BJ (cell line): ENCODE measurements at regions of chr2 and their contacts with region 1.

Region 1: DNA sequence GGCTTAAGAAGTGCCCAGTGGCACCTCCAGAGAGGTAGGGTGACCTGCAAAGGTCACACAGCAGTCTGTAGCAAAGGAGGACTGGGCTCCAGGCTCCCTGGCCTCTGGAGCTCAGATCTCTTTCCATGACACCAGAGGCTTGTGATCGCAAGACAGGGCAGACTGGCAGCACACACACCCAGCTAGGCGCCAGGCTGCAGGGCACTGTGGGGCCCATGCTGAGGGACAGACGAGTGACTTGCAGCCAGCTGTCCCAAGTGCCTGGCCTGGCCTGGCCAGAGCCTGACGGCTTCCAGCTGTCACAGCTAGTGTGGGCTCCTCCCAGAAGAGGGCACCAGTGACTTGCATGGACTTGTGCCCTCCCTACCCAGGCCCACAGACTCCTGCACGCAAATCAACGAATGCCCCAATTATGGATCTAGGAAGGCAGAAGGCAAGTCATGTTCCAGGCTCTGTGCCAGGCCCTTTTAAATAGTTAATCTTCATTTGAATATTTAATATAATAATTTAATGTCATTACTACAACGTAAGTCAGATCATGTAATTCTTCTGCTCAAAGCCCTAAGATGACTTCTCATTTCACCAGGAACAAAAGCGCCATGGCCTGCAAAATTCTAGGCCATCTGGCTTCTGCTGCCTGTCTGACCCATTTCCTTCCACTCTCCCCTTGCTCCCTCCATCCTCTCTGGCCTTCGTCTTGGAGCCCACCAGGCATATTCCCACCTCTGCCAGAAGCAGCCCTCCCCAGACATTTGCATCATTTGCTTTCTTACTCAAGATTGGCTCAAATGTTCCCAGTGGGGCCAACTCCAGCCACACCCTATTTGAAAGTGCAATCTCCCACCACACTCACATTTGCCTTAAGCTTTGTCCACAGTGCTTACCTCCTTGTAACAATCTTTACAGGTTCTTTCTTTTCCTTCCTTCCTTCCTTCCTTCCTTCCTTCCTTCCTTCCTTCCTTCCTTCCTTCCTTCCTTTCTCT is 3.7 kb upstream of the SPEG start:
- DNase-seq: no peak
- H3K4me3 ChIP-seq: no peak overlapping the region
- H3K27me3 ChIP-seq: 0 out of 2 replicates have a peak, but pooled peaks cover 2% of the 10 kb centered on the region
- CTCF ChIP-seq: peak; percentile 35; the same call in 1 of the 2 replicates

Region 2: DNA sequence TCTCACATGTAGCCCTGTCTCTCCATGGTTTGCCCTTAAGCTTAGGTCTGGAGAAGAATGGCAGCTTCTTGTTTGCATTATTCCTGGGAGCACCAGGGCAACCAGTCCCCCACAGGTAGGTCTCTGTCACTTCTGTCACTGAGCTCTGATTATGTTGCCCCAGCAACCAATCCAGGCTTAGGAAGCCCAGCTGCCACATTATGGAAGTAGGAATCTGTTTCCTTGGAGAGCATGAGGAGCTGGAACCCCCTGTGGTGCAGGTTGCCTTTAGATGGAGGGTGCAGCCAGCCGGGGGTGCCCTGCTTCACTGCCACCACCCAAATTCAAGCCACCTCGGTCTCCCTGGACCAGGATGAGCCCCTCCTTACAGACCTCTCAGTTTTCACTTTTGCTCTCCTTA is 103.2 kb before region 1 on chr2:
- CTCF ChIA-PET with region 1: no interaction called
- POLR2A ChIA-PET with region 1: no interaction called
- DNase-seq: no peak
- H3K4me3 ChIP-seq: no peak overlapping the region
- H3K27me3 ChIP-seq: peaks cover 23% of the 10 kb centered on the region
- CTCF ChIP-seq: no peak

Region 3: GRCh38 chr2:219441451-219442255 is 10.7 kb after region 1 on chr2:
- CTCF ChIA-PET with region 1: interaction called, 14 read pairs
- POLR2A ChIA-PET with region 1: no interaction called
- DNase-seq: no peak
- H3K4me3 ChIP-seq: peak overlapping the region; percentile 68
- H3K27me3 ChIP-seq: no peaks in the 10 kb centered on the region
- CTCF ChIP-seq: no peak